BJ (cell line): ENCODE measurements at regions of chr19 and their contacts with region 1.

Region 1: DNA sequence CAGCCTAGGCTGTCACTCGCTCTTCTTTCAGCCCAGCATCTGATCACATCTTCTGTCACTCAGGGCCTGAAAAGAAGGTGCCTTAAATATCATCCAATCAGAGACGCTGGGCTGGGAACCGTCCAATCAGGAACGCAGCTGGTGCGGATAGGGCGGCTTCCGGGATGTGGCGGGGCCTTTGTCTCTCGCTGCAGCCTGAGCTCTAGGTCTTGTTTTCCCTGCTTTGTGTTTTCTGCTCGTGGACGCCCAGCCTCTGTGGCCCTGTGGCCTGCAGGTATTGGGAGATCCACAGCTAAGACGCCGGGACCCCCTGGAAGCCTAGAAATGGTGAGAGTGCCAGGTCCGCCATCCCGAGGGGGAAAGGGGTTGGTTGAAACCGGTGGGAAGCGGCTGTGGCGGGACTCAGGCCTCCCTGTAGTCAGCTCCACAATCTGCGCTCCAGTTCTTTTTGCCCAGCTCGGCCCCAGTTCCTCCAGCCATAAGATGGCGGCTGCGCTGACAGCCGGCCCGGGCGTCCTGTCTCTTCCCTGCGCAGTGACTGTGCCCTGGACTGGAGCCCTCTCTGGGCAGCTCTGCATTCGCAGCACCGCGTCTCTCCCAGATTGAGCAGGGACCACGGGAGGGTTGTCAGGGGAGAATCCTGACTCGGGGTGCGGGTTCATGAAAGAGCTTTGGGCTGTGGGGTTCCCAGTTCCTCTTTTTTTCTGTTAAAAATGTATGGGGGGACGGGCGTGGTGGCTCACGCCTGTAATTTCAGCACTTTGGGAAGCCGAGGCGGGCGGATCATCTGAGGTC is at the start of gene ZNF85:
- DNase-seq: peak; percentile 71
- H3K4me3 ChIP-seq: peak within 1 kb of the TSS; percentile 87
- H3K27me3 ChIP-seq: no peaks in the 10 kb centered on the region
- CTCF ChIP-seq: 0 out of 2 replicates have a peak, but pooled peaks have one; percentile 3
- polyA plus RNA-seq, gene ZNF85: 4.6 and 8.7 TPM in 2 replicates

Region 2: DNA sequence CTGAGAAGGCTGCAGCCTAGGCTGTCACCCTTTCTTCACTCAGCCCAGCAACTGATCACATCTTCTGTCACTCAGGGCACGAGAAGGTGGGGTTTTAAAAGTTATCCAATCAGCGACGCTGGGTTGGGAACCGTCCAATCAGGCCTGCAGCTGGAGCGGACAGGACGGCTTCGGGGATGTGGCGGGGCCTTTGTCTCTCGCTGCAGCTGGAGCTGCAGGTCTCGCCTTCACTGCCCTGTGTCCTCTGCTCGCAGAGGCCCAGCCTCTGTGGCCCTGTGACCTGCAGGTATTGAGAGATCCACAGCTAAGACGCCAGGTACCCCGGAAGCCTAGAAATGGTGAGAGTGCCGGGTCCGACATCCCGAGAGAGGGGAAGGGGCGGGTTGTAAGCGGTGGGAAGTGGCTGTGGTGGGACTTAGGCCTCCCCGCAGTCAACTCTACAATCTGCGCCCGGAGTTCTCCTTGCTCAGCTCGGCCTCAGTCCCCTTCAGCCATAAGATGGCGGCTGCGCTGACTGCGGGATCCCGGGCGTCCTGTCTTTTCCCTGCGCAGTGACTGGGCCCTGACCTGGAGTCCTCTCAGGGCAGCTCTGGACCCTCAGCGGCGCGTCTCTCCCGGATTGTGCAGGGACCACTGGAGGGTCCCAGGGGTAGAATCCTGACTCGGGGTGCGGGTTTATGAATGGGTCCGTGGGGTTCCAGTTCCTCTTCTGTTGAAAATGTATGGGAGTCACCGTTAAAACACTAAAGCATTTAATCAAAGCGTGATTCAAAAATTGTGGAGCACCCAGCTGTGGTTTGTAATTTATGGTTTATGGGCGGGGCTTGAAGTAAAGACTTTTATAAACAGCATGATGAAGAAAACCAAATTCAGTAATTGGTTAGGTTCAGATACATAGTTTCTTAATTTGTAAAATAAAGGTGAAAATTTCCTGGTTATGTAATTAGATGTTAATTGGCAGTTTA is 159.0 kb after region 1 on chr19 and contains the start of gene ZNF714:
- CTCF ChIA-PET with region 1: no interaction called
- POLR2A ChIA-PET with region 1: interaction called, 19 read pairs
- DNase-seq: peak; percentile 78
- H3K4me3 ChIP-seq: peak within 1 kb of the TSS; percentile 69
- H3K27me3 ChIP-seq: no peaks in the 10 kb centered on the region
- CTCF ChIP-seq: no peak
- polyA plus RNA-seq, gene ZNF714: 5.6 and 7.9 TPM in 2 replicates